ENCODE measurements at regions of chr12 and their contacts with region 1.

Region 1: GRCh38 chr12:56645717-56646446 is at the start of gene ATP5F1B:
- DNase-seq: peak; percentile 96 to 100 (median 98)
- H3K4me3 ChIP-seq: peak within 1 kb of the TSS; percentile 38 to 83 (median 74)
- H3K27ac ChIP-seq: peak within 1 kb of the TSS; percentile 85 to 93 (median 90)
- H3K4me1 ChIP-seq: peaks cover 4 to 34% of the 10 kb centered on the region in 2 donors
- H3K27me3 ChIP-seq: no peaks in the 10 kb centered on the region
- CTCF ChIP-seq: peak in 1 of 6 experiments; percentile 4
- POLR2A ChIP-seq: peak; percentile 97 to 99
- total RNA-seq, gene ATP5F1B: 512 to 1,073 (median 830) TPM

Region 2: DNA sequence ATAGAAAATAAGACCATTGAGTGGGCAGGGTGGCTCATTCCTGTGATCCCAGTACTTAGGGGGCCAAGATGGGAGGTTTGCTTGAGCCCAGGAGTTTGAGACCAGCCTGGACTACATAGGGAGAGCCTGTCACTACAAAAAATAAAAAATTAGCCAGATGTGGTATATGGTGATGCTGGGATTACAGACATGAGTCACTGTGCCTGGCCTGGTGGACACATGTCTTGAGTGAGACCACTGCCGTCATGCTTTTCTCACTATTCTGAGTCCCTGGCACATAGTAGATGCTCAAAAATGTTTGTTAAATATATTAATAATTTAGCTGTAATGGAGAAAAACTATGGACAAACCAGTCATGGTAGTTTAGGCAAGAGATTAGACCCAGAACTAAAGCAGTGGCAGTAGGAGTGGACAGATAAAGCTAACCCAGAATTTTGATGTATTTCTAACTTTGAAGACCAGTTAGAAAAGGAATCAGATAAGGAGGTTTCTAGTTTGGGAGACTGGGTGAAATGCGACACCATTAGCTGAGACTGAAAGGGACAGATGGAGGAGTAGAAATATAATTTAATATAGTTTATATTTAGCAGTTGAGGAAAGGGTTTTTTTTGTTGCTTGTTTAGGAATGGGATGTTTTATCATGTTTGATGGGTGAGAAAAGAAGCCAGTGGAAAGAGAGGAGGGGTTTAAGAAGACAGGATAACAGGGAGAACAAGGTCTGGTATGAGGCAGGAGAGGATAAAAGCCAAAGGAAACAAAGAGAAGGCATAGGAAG is 49.6 kb after region 1 on chr12:
- intact Hi-C with region 1: no loop called
- DNase-seq: no peak
- H3K4me3 ChIP-seq: no peak overlapping the region
- H3K27ac ChIP-seq: no peak overlapping the region
- H3K4me1 ChIP-seq: no peaks in the 10 kb centered on the region
- H3K27me3 ChIP-seq: no peaks in the 10 kb centered on the region
- CTCF ChIP-seq: no peak
- POLR2A ChIP-seq: no peak

Region 3: GRCh38 chr12:56709759-56710376 is 64.0 kb after region 1 on chr12:
- intact Hi-C with region 1: no loop called
- DNase-seq: no peak
- H3K4me3 ChIP-seq: no peak overlapping the region
- H3K27ac ChIP-seq: no peak overlapping the region
- H3K4me1 ChIP-seq: peaks cover 0 to 6% of the 10 kb centered on the region in 2 donors
- H3K27me3 ChIP-seq: no peaks in the 10 kb centered on the region
- CTCF ChIP-seq: no peak
- POLR2A ChIP-seq: no peak

Region 4: GRCh38 chr12:56724972-56725722 is 79.3 kb after region 1 on chr12 and contains the start of gene NACA:
- intact Hi-C with region 1: loop called in 1 of 2 experiments (anchors 10 kb)
- DNase-seq: peak; percentile 97 to 100 (median 99)
- H3K4me3 ChIP-seq: peak within 1 kb of the TSS; percentile 24 to 99 (median 57)
- H3K27ac ChIP-seq: peak within 1 kb of the TSS; percentile 81 to 97 (median 87)
- H3K4me1 ChIP-seq: peaks cover 33 to 36% of the 10 kb centered on the region in 2 donors
- H3K27me3 ChIP-seq: no peaks in the 10 kb centered on the region
- CTCF ChIP-seq: no peak
- POLR2A ChIP-seq: peak; percentile 82 to 97
- total RNA-seq, gene NACA: 757 to 1,597 (median 1,185) TPM

Region 5: GRCh38 chr12:57740656-57741412 is 1095.0 kb after region 1 on chr12:
- intact Hi-C with region 1: no loop called
- DNase-seq: no peak
- H3K4me3 ChIP-seq: no peak overlapping the region
- H3K27ac ChIP-seq: no peak overlapping the region
- H3K4me1 ChIP-seq: peaks cover 20 to 30% of the 10 kb centered on the region in 2 donors
- H3K27me3 ChIP-seq: peaks cover 35% of the 10 kb centered on the region
- CTCF ChIP-seq: no peak
- POLR2A ChIP-seq: no peak

Measured in adrenal gland (tissue), 19 donors.